Thyroid gland (tissue), 4 donors: ENCODE measurements at regions of chr1 and their contacts with region 1.

Region 1: GRCh38 chr1:22416555-22417454 is 34.8 kb upstream of the ZBTB40 start:
- DNase-seq: peak; percentile 75 to 80
- H3K4me3 ChIP-seq: no peak overlapping the region
- H3K27ac ChIP-seq: peak overlapping the region in 1 of 3 donors; percentile 98
- H3K4me1 ChIP-seq: peaks cover 19 to 27% of the 10 kb centered on the region in 2 donors
- H3K27me3 ChIP-seq: no peaks in the 10 kb centered on the region
- CTCF ChIP-seq: peak; percentile 59 to 97 (median 94)
- POLR2A ChIP-seq: no peak

Region 2: GRCh38 chr1:22105611-22106207 is 311.1 kb before region 1 on chr1:
- intact Hi-C with region 1: loop called (anchors 10 kb)
- DNase-seq: peak; percentile 29 to 45
- H3K4me3 ChIP-seq: no peak overlapping the region
- H3K27ac ChIP-seq: no peak overlapping the region
- H3K4me1 ChIP-seq: peaks cover 0 to 2% of the 10 kb centered on the region in 2 donors
- H3K27me3 ChIP-seq: no peaks in the 10 kb centered on the region
- CTCF ChIP-seq: peak; percentile 73 to 85 (median 80)
- POLR2A ChIP-seq: no peak

Region 3: GRCh38 chr1:22131875-22132486 is 284.8 kb before region 1 on chr1:
- intact Hi-C with region 1: loop called (anchors 2 kb)
- DNase-seq: peak; percentile 65 to 66
- H3K4me3 ChIP-seq: no peak overlapping the region
- H3K27ac ChIP-seq: no peak overlapping the region
- H3K4me1 ChIP-seq: peaks cover 23 to 33% of the 10 kb centered on the region in 2 donors
- H3K27me3 ChIP-seq: no peaks in the 10 kb centered on the region
- CTCF ChIP-seq: peak; percentile 59 to 88 (median 80)
- POLR2A ChIP-seq: no peak

Region 4: GRCh38 chr1:22388671-22389450 is 27.9 kb before region 1 on chr1:
- intact Hi-C with region 1: no loop called
- DNase-seq: no peak
- H3K4me3 ChIP-seq: no peak overlapping the region
- H3K27ac ChIP-seq: no peak overlapping the region
- H3K4me1 ChIP-seq: peaks cover 0 to 7% of the 10 kb centered on the region in 2 donors
- H3K27me3 ChIP-seq: no peaks in the 10 kb centered on the region
- CTCF ChIP-seq: no peak
- POLR2A ChIP-seq: no peak

Region 5: DNA sequence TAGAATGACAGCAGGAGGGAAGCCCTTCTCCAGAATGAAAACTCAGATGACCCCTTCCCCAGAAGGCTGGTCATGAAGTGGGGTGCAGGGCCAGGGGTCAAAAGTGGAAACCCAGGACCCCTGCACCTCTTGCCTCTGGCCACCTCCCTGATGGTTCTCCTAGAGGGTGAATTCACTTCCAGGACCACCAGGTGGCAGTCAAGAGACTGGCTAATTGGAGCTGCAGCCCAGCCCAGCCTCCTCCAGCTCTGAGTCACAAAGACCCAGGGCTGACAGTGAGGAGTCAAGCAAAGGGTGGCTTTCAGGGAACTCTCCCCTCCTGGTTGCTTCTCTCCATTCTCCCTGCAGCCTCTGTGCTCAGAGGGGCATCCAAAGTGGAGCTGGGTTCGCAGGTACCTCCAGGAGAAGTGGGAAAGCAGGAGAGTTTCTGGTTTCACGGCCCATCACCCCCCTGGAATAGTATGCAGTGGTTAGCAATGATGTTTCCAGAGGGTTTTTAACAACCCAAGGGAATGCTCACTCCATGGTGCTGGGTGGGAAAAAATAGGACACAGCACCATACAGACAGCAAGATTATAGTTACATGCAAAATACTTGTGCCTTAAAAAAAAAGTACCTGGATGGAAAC is 287.7 kb after region 1 on chr1:
- intact Hi-C with region 1: no loop called
- DNase-seq: peak; percentile 88 to 91
- H3K4me3 ChIP-seq: no peak overlapping the region
- H3K27ac ChIP-seq: no peak overlapping the region
- H3K4me1 ChIP-seq: no peaks in the 10 kb centered on the region
- H3K27me3 ChIP-seq: no peaks in the 10 kb centered on the region
- CTCF ChIP-seq: peak; percentile 80 to 92 (median 90)
- POLR2A ChIP-seq: no peak